AG04450 (cell line): ENCODE measurements at regions of chr4 and their contacts with region 1.

Region 1: GRCh38 chr4:153573881-153574802 is 108.0 kb downstream of the TMEM131L start:
- DNase-seq: peak; percentile 64
- H3K4me3 ChIP-seq: no peak overlapping the region
- H3K27ac ChIP-seq: no peak overlapping the region
- H3K27me3 ChIP-seq: no peaks in the 10 kb centered on the region
- CTCF ChIP-seq: peak; percentile 74

Region 2: GRCh38 chr4:153326513-153326912 is 247.6 kb before region 1 on chr4:
- CTCF ChIA-PET with region 1: interaction called, 12 read pairs
- POLR2A ChIA-PET with region 1: interaction called, 3 read pairs
- DNase-seq: no peak
- H3K4me3 ChIP-seq: no peak overlapping the region
- H3K27ac ChIP-seq: no peak overlapping the region
- H3K27me3 ChIP-seq: no peaks in the 10 kb centered on the region
- CTCF ChIP-seq: no peak

Region 3: DNA sequence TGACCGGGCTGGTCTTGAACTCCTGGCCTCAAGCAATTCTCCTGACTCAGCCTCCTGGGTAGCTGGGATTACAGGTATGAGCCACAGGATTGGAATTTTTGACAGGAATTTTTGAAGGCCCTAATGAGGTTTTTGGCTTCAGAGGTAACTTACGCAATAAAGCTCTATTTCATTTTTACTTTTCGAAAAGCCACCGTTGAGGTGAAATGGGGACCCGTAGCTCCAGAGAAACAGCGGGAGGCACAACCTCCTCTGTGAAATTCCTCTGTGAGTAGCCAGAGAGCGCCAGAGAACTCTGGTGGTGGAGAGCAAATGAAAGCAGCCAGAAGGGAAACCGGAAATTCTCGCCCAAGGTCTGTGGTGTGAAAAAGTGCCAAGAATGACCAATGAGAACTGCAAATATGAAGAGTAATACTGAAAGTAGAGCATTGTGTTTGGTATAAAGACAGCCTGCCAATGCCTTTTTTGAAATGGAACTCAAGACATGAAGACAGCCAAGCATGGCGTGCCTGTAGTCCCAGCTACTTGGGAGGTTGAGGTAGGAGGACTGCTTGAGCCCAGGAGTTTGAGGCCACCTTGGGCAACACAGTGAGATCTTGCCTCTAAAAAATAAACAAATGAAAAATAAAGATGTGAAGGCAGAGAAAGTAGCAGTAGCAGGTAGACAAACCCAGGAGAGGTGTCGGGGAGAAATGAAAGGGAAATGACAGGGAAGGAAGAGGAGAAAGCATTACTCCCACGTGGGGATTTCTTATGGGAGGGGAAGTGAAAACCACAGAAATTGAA is 141.0 kb before region 1 on chr4:
- CTCF ChIA-PET with region 1: interaction called, 11 read pairs
- POLR2A ChIA-PET with region 1: no interaction called
- DNase-seq: no peak
- H3K4me3 ChIP-seq: no peak overlapping the region
- H3K27ac ChIP-seq: no peak overlapping the region
- H3K27me3 ChIP-seq: no peaks in the 10 kb centered on the region
- CTCF ChIP-seq: peak; percentile 54

Region 4: DNA sequence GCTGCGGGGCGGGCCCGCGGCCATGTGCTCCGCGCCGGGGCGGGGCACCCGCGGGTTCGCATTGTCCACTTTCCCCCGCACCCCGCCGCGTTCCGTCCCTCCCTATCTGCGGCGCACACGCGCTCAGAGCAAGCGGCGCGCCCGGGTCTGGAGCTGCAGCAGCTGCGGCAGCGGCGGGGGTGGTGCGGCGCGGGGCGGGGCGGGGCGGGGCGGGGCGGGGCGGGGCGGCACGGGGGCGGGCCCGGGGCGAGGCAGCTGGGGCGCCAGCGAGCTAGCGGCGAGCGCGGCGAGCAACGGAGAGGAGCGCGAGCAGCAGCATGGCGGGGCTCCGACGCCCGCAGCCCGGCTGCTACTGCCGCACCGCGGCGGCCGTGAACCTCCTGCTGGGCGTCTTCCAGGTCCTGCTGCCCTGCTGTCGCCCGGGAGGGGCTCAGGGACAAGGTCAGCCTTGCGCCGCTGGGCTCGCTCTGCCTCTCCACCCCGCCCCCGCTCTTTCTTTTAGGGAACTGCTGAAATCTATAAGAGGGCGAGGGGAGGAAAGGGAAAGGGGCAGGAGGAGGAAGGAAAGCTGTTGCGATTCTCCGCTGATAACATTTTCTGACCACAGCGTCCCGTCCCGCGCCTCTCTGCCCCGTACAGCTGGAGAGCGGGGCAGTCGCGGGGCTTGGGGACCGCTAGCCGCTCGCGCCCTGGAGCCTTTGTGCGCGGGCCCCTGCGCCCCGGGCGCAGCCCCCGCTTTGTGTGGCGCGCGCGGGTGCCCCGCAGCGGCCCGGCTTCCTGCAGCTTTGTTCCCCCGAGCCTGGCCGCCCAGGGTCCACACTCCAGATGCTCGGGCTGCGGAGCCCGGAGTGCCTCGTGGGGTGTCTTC is 107.8 kb before region 1 on chr4 and contains the start of gene TMEM131L:
- CTCF ChIA-PET with region 1: interaction called, 26 read pairs
- POLR2A ChIA-PET with region 1: interaction called, 7 read pairs
- DNase-seq: no peak
- H3K4me3 ChIP-seq: peak within 1 kb of the TSS; percentile 89
- H3K27ac ChIP-seq: no peak within 1 kb of the TSS
- H3K27me3 ChIP-seq: no peaks in the 10 kb centered on the region
- CTCF ChIP-seq: peak; percentile 20
- polyA plus RNA-seq, gene TMEM131L: 13.2 and 15.5 TPM in 2 replicates

Region 5: DNA sequence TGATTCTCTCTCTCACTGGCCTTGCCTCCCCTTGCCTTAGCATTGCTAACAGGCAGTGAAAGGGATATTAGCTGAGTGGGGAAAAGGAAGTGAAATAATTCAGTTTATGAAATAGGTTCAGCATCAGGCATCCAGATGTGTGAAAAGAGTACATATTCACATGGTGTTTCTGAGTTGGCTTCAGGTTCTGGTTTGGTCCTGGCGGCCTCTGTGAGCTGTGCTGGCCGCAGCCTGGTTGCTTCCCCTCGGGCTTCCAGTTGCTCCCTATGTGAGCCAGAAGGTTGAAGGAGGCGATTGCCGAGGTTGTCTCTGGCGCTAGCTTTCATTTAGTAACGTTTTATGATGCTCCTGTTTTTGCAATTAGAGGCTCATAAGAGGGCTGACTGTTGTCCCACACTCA is 10.9 kb after region 1 on chr4:
- CTCF ChIA-PET with region 1: interaction called, 13 read pairs
- POLR2A ChIA-PET with region 1: no interaction called
- DNase-seq: no peak
- H3K4me3 ChIP-seq: no peak overlapping the region
- H3K27ac ChIP-seq: no peak overlapping the region
- H3K27me3 ChIP-seq: no peaks in the 10 kb centered on the region
- CTCF ChIP-seq: no peak

Region 6: DNA sequence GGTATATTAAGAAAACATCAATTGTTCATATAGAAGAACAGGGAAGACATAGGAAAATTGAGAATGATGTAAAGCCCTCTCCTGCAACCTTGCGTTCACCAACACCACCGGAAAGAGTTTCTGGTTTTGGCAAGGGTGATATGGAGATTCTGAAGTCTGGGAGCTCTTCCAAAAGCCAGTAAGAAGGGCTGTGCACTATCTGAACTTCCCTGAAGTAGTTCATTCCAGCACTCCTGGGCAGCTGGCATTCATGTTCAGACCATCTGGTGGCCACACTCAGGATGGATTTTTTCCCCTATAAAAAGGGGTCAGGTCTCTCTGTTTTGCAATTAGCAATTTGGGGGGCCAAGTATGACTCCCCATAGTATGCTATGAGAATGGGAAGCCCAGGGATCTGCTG is 94.5 kb after region 1 on chr4:
- CTCF ChIA-PET with region 1: no interaction called
- POLR2A ChIA-PET with region 1: no interaction called
- DNase-seq: no peak
- H3K4me3 ChIP-seq: no peak overlapping the region
- H3K27ac ChIP-seq: no peak overlapping the region
- H3K27me3 ChIP-seq: no peaks in the 10 kb centered on the region
- CTCF ChIP-seq: no peak